ENCODE measurements at regions of chr16 and their contacts with region 1.

Region 1: DNA sequence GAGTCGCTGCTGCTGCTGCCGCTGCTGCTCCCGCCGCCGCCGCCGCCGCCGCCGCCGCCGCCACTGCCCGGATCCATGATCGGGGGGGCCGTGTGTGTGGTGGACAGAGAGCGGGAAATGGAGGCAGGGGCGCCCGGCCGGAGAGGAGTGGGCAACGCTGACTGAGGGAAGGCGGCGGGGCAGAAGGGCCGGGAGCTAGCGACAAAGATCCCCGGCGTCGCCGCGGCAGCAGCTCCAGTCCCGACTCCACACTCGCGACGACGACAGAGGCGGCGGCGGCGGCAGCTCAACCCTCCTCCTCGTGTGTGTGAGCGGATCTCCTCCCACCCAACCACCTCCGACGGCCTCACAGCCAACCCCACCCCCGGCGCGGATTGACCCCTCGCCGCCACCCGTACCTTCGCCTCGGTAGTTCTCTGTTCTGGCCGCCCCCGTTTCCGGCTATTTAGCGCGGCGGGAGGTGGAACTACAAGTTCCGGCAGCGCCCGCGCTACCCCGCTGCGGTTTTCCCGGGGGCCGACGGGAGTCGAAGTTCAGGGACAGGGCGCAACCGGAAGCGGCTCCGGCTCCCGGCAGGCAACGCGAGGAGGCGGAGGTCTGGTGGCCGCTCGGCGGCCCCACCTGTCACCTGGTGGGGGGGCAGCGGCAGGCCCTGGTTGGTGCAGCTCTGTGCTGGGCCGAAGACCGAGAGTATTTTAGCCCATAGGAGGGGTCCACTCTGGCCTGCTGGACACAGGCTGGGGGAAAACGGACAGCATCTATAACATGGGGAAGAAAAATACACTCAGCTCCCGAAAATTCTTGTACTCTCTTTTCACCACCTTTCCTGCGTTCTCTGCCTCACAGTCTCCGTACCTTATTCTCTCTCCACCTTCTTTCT is at the start of gene GSPT1:
- DNase-seq: peak; percentile 97 to 100
- H3K4me3 ChIP-seq: peak within 1 kb of the TSS; percentile 87 to 99
- H3K27ac ChIP-seq: peak within 1 kb of the TSS; percentile 93
- H3K4me1 ChIP-seq: peaks cover 0 to 23% of the 10 kb centered on the region in 2 donors
- H3K27me3 ChIP-seq: no peaks in the 10 kb centered on the region
- CTCF ChIP-seq: no peak
- total RNA-seq, gene GSPT1: 56.3 TPM

Region 2: GRCh38 chr16:11797166-11797956 is 118.5 kb before region 1 on chr16 and contains the start of gene ZC3H7A:
- intact Hi-C with region 1: loop called (anchors 5 kb)
- DNase-seq: peak; percentile 85 to 98
- H3K4me3 ChIP-seq: peak within 1 kb of the TSS; percentile 70 to 91
- H3K27ac ChIP-seq: peak within 1 kb of the TSS; percentile 97 to 98
- H3K4me1 ChIP-seq: peaks cover 14 to 48% of the 10 kb centered on the region in 2 donors
- H3K27me3 ChIP-seq: no peaks in the 10 kb centered on the region
- CTCF ChIP-seq: peak; percentile 36 to 99 (median 53)
- total RNA-seq, gene ZC3H7A: 56.9 TPM

Region 3: DNA sequence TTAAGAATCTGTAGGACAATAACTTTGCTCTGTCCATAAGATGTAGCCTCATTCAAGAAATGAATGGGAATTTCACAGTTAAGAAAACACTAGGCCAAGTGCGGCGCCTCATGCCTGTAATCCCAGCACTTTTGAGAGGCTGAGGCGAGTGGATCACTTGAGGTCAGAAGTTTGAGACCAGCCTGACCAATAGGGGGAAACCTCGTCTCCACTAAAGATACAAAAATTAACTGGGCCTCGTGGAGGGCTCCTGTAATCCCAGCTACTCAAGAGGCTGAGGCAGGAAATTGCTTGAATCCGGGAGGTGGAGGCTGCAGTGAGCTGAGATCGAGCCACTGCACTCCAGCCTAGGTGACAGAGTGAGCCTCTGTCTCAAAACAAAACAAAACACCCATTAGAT is 44.7 kb before region 1 on chr16:
- intact Hi-C with region 1: no loop called
- DNase-seq: no peak
- H3K4me3 ChIP-seq: no peak overlapping the region
- H3K27ac ChIP-seq: peak overlapping the region; percentile 29 to 50
- H3K4me1 ChIP-seq: peaks cover 0 to 33% of the 10 kb centered on the region in 2 donors
- H3K27me3 ChIP-seq: no peaks in the 10 kb centered on the region
- CTCF ChIP-seq: no peak

Region 4: GRCh38 chr16:11977376-11978041 is 61.6 kb after region 1 on chr16:
- intact Hi-C with region 1: loop called (anchors 1 kb)
- DNase-seq: peak in 1 of 2 donors; percentile 66
- H3K4me3 ChIP-seq: peak overlapping the region; percentile 78 to 92
- H3K27ac ChIP-seq: peak overlapping the region; percentile 73 to 83
- H3K4me1 ChIP-seq: peaks cover 0 to 8% of the 10 kb centered on the region in 2 donors
- H3K27me3 ChIP-seq: no peaks in the 10 kb centered on the region
- CTCF ChIP-seq: no peak

Region 5: GRCh38 chr16:12062343-12063005 is 146.6 kb after region 1 on chr16:
- intact Hi-C with region 1: loop called (anchors 2 kb)
- DNase-seq: peak; percentile 89 to 98
- H3K4me3 ChIP-seq: no peak overlapping the region
- H3K27ac ChIP-seq: peak overlapping the region; percentile 89 to 94
- H3K4me1 ChIP-seq: peaks cover 7 to 31% of the 10 kb centered on the region in 2 donors
- H3K27me3 ChIP-seq: no peaks in the 10 kb centered on the region
- CTCF ChIP-seq: no peak

Region 6: GRCh38 chr16:12876778-12877177 is 960.9 kb after region 1 on chr16:
- intact Hi-C with region 1: no loop called
- DNase-seq: no peak
- H3K4me3 ChIP-seq: no peak overlapping the region
- H3K27ac ChIP-seq: no peak overlapping the region
- H3K4me1 ChIP-seq: no peaks in the 10 kb centered on the region
- H3K27me3 ChIP-seq: no peaks in the 10 kb centered on the region
- CTCF ChIP-seq: no peak

Measured in ascending aorta (tissue), 2 donors.